GM12878 (cell line): ENCODE measurements at regions of chr11 and their contacts with region 1.

Region 1: GRCh38 chr11:70467201-70468085 is 69.1 kb downstream of the CTTN start:
- DNase-seq: peak; percentile 45
- ATAC-seq: peak; percentile 33; the same call in 2 of the 3 replicates
- H3K4me3 ChIP-seq: no peak overlapping the region
- H3K27ac ChIP-seq: no peak overlapping the region
- H3K4me1 ChIP-seq: peaks cover 43% of the 10 kb centered on the region
- H3K27me3 ChIP-seq: no peaks in the 10 kb centered on the region
- CTCF ChIP-seq: peak; percentile 83 to 88 (median 87)
- EP300 ChIP-seq: no peak
- POLR2A ChIP-seq: no peak
- RAD21 ChIP-seq: peak; percentile 89

Region 2: GRCh38 chr11:69918938-69919650 is 548.3 kb before region 1 on chr11:
- CTCF ChIA-PET with region 1: no interaction called
- POLR2A ChIA-PET with region 1: no interaction called
- RAD21 ChIA-PET with region 1: no interaction called
- SMC1A ChIA-PET with region 1: no interaction called
- in situ Hi-C with region 1: loop called (anchors 5 kb)
- intact Hi-C with region 1: loop called (anchors 2 kb)
- DNase-seq: no peak
- ATAC-seq: peak; percentile 91
- H3K4me3 ChIP-seq: no peak overlapping the region
- H3K27ac ChIP-seq: no peak overlapping the region
- H3K4me1 ChIP-seq: no peaks in the 10 kb centered on the region
- H3K27me3 ChIP-seq: no peaks in the 10 kb centered on the region; a peak in 1 of 4 replicates
- CTCF ChIP-seq: peak; percentile 71 to 88 (median 72)
- EP300 ChIP-seq: no peak
- POLR2A ChIP-seq: no peak
- RAD21 ChIP-seq: peak; percentile 62

Region 3: GRCh38 chr11:70191495-70192140 is 275.8 kb before region 1 on chr11:
- CTCF ChIA-PET with region 1: interaction called, 7 read pairs
- POLR2A ChIA-PET with region 1: no interaction called
- RAD21 ChIA-PET with region 1: no interaction called
- SMC1A ChIA-PET with region 1: no interaction called
- in situ Hi-C with region 1: no loop called
- intact Hi-C with region 1: loop called (anchors 1 kb)
- DNase-seq: no peak
- ATAC-seq: peak; percentile 96
- H3K4me3 ChIP-seq: no peak overlapping the region
- H3K27ac ChIP-seq: no peak overlapping the region
- H3K4me1 ChIP-seq: no peaks in the 10 kb centered on the region
- H3K27me3 ChIP-seq: no peaks in the 10 kb centered on the region
- CTCF ChIP-seq: peak; percentile 61 to 83 (median 79)
- EP300 ChIP-seq: no peak
- POLR2A ChIP-seq: no peak
- RAD21 ChIP-seq: peak; percentile 85

Region 4: DNA sequence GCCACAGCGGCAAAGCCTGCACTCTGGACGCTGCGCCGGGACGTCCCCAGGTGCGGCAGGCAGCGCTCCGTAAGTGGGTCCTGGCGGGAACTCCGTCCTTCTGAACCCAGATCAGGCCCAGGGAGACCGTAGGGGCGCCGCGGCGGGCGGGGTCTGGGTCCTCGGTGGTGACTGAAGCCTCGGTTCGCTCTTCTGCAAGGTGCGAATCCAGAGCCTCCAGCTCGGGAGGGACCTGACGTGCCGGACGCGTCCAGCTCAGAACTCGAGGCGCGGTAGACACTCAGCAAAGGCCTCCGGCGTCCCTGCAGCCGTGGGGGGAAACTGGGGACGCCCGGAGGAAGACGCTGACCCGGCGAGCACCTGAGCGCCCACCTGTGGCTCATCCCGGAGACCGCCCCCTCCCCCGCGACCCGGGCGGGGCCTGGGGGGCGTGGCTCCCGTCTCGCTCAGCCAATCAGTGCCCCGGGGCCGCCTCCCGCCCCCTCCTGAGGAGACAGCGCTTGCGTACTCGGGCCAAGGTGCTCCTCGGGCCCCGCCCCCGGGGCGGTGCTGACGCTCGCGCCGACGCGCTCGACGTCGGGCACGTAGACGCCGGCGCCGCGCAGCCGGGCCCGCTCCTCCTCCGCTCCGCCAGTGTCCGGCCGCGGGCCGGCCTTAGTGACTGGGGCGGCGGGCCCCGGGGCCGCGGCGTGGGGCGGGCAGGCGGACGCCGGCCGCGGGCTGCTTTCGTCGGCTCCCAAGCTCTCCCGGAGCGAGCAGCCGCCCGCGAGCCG is 197.2 kb before region 1 on chr11 and contains the start of gene PPFIA1:
- CTCF ChIA-PET with region 1: no interaction called
- POLR2A ChIA-PET with region 1: no interaction called
- RAD21 ChIA-PET with region 1: no interaction called
- SMC1A ChIA-PET with region 1: no interaction called
- in situ Hi-C with region 1: no loop called
- intact Hi-C with region 1: loop called (anchors 10 kb)
- DNase-seq: peak; percentile 67
- ATAC-seq: peak; percentile 95
- H3K4me3 ChIP-seq: peak within 1 kb of the TSS; percentile 83
- H3K27ac ChIP-seq: peak within 1 kb of the TSS; percentile 65
- H3K4me1 ChIP-seq: peaks cover 13% of the 10 kb centered on the region; the same call in 1 of the 2 replicates
- H3K27me3 ChIP-seq: no peaks in the 10 kb centered on the region
- CTCF ChIP-seq: peak in 2 of 3 experiments; percentile 12 to 15; a peak in 3 of 6 replicates
- EP300 ChIP-seq: no peak
- POLR2A ChIP-seq: peak; percentile 83
- RAD21 ChIP-seq: no peak
- polyA plus RNA-seq, gene PPFIA1: 5.2 to 7.1 TPM

Region 5: DNA sequence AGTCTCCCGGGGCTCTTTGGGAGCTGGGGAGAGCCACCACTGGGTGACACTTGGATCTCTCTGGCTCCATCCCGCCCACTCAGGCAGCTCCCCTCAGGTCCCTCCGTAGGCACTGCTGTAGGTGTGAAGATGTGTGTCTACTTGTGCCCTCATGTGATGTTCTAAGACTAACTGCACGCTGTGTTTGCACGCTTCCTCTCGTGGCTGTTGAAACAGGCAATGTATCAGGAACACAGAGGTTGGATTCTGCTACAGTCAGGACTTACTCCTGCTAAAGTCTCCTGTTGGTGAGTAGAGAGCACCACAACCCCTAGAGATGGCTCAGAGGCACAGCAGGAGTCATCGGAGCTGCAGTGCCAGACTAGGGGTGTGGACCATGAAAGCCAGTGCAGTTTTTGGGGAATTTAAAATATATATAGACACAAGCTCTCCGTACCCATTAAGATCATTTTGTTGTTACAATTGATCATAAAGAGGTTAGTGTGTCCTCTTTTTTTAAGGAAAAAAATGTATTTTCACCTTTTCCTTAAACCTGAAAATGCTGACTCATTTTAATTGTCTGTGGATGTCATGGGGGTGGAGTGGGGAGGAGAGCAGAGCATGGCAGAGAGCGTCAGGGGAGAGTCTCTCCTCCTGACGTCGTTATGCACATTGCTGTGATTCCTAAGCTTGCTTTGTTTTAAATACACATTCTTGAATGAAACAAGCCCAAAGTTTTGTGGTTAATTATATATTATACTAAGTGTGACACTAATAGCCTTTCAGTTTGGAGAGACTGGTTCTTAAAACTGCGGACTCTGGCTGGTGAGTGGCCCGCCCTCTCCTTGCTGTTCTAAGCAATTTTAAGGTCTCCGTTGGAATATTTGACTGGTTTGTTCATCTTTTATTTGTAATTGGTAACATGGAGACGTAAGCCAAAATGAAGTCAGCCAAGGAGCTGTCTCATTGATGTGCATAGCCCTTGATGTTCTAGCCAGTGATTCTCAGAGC is 85.3 kb before region 1 on chr11:
- CTCF ChIA-PET with region 1: no interaction called
- POLR2A ChIA-PET with region 1: no interaction called
- RAD21 ChIA-PET with region 1: no interaction called
- SMC1A ChIA-PET with region 1: no interaction called
- in situ Hi-C with region 1: no loop called
- intact Hi-C with region 1: no loop called
- DNase-seq: no peak
- ATAC-seq: no peak
- H3K4me3 ChIP-seq: no peak overlapping the region
- H3K27ac ChIP-seq: no peak overlapping the region
- H3K4me1 ChIP-seq: no peaks in the 10 kb centered on the region
- H3K27me3 ChIP-seq: no peaks in the 10 kb centered on the region
- CTCF ChIP-seq: no peak
- EP300 ChIP-seq: no peak
- POLR2A ChIP-seq: no peak
- RAD21 ChIP-seq: no peak

Region 6: GRCh38 chr11:70755410-70756161 is 288.1 kb after region 1 on chr11:
- CTCF ChIA-PET with region 1: interaction called, 13 read pairs
- POLR2A ChIA-PET with region 1: no interaction called
- RAD21 ChIA-PET with region 1: no interaction called
- SMC1A ChIA-PET with region 1: no interaction called
- in situ Hi-C with region 1: loop called (anchors 5 kb)
- intact Hi-C with region 1: loop called (anchors 1 kb)
- DNase-seq: no peak
- ATAC-seq: peak; percentile 100
- H3K4me3 ChIP-seq: no peak overlapping the region
- H3K27ac ChIP-seq: no peak overlapping the region
- H3K4me1 ChIP-seq: no peaks in the 10 kb centered on the region
- H3K27me3 ChIP-seq: no peaks in the 10 kb centered on the region; a peak in 2 of 4 replicates
- CTCF ChIP-seq: peak; percentile 74 to 96 (median 90)
- EP300 ChIP-seq: no peak
- POLR2A ChIP-seq: no peak
- RAD21 ChIP-seq: peak; percentile 73

Region 7: GRCh38 chr11:71080239-71081097 is 613.0 kb after region 1 on chr11:
- CTCF ChIA-PET with region 1: interaction called, 4 read pairs
- POLR2A ChIA-PET with region 1: no interaction called
- RAD21 ChIA-PET with region 1: no interaction called
- SMC1A ChIA-PET with region 1: no interaction called
- in situ Hi-C with region 1: no loop called
- intact Hi-C with region 1: loop called (anchors 1 kb)
- DNase-seq: peak; percentile 17
- ATAC-seq: peak; percentile 96
- H3K4me3 ChIP-seq: no peak overlapping the region
- H3K27ac ChIP-seq: no peak overlapping the region
- H3K4me1 ChIP-seq: no peaks in the 10 kb centered on the region
- H3K27me3 ChIP-seq: no peaks in the 10 kb centered on the region
- CTCF ChIP-seq: peak; percentile 86 to 92 (median 88)
- EP300 ChIP-seq: no peak
- POLR2A ChIP-seq: no peak
- RAD21 ChIP-seq: peak; percentile 65